Prostate gland (tissue), 2 donors: ENCODE measurements at regions of chr14 and their contacts with region 1.

Region 1: GRCh38 chr14:64671591-64671990 is 32.6 kb upstream of the PLEKHG3 start:
- DNase-seq: no peak
- H3K4me3 ChIP-seq: no peak overlapping the region
- H3K27ac ChIP-seq: no peak overlapping the region
- H3K4me1 ChIP-seq: no peaks in the 10 kb centered on the region
- H3K27me3 ChIP-seq: no peaks in the 10 kb centered on the region
- CTCF ChIP-seq: peak; percentile 29 to 83 (median 72)
- POLR2A ChIP-seq: no peak

Region 2: GRCh38 chr14:64117671-64118402 is 553.8 kb before region 1 on chr14:
- intact Hi-C with region 1: no loop called
- DNase-seq: peak; percentile 38
- H3K4me3 ChIP-seq: no peak overlapping the region
- H3K27ac ChIP-seq: no peak overlapping the region
- H3K4me1 ChIP-seq: peaks cover 5% of the 10 kb centered on the region
- H3K27me3 ChIP-seq: no peaks in the 10 kb centered on the region
- CTCF ChIP-seq: no peak
- POLR2A ChIP-seq: no peak

Region 3: GRCh38 chr14:64745511-64746091 is 74.0 kb after region 1 on chr14:
- intact Hi-C with region 1: loop called (anchors 2 kb)
- DNase-seq: no peak
- H3K4me3 ChIP-seq: no peak overlapping the region
- H3K27ac ChIP-seq: no peak overlapping the region
- H3K4me1 ChIP-seq: no peaks in the 10 kb centered on the region
- H3K27me3 ChIP-seq: no peaks in the 10 kb centered on the region
- CTCF ChIP-seq: no peak
- POLR2A ChIP-seq: no peak

Region 4: GRCh38 chr14:64762044-64763034 is 90.7 kb after region 1 on chr14:
- intact Hi-C with region 1: loop called (anchors 2 kb)
- DNase-seq: peak; percentile 84
- H3K4me3 ChIP-seq: no peak overlapping the region
- H3K27ac ChIP-seq: peak overlapping the region; percentile 38 to 54
- H3K4me1 ChIP-seq: peaks cover 12% of the 10 kb centered on the region
- H3K27me3 ChIP-seq: no peaks in the 10 kb centered on the region
- CTCF ChIP-seq: peak in 3 of 4 experiments; percentile 1 to 2 (median 2)
- POLR2A ChIP-seq: no peak

Region 5: DNA sequence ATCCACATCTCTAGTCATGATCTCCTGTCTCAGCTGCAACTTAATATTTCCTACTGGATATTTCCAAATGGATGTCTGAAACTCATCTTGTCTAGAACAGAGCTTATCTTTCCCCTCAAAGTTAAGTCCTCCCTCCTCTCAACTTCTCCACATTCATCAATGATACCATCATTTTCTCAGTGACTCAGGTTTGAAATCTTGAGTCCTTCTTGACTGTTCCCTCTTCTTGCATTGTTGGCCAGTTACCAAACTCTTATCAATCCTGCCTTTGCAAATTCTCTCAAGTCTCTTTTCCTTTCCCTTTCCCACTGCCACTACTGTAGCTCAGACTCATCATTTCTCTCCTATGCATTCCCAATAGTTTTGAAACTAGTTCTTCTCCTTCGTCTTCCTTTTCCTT is 228.4 kb after region 1 on chr14:
- intact Hi-C with region 1: loop called (anchors 5 kb)
- DNase-seq: no peak
- H3K4me3 ChIP-seq: no peak overlapping the region
- H3K27ac ChIP-seq: no peak overlapping the region
- H3K4me1 ChIP-seq: no peaks in the 10 kb centered on the region
- H3K27me3 ChIP-seq: no peaks in the 10 kb centered on the region
- CTCF ChIP-seq: no peak
- POLR2A ChIP-seq: no peak